Left colon (tissue), 2 donors: ENCODE measurements at regions of chr5 and their contacts with region 1.

Region 1: GRCh38 chr5:36301858-36302603 is at the start of gene RANBP3L:
- DNase-seq: peak in 1 of 2 donors; percentile 4
- ATAC-seq: peak; percentile 91
- total RNA-seq, gene RANBP3L: 0.17 TPM in 1 of 2 donors, not detected in the other

Region 2: DNA sequence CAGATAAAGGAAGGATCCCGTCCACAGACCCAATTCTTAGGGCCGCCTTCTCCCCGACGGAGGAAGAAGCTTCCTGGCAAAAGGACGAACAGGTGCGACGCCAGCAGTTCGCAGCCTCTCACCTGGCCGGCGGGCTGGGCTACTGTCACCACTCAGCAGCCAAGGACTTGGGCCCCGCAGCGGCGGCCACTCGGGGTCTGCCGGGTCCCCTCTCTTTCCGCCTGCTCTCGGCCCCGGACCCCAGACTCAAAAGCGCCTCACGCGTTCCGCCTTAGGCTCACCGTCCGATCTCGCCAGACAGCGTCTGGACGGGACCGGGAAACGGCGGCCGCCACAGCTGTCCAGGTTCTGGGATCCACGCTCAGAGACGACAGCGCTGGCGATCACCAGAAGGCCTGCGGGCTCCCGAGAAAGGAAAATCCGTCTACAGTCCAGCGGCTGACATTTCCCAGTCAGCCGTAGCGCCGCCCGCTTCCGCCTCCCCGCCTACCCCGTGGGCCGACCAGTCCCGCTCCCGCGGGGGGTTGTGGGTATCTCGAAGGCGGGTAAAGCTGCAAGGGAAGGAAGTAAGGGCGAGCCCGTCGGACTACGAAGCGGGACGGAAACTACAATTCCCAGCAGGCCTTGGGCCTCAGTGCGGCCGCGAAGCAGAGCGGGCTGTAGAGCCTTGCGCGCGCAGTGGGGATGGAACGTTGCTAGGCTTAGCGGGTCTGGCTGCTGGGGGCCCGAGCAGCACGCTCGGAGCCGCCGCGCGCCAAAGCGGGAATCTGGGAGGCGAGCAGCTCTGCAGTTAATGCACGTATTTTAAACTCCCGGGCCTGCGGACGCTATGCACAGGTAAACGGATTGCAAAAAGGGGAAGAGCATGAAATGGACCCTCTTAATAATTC is 150.4 kb before region 1 on chr5 and contains the starts of genes LMBRD2 and SKP2:
- intact Hi-C with region 1: no loop called
- DNase-seq: peak; percentile 97 to 98
- ATAC-seq: peak; percentile 99
- total RNA-seq, gene LMBRD2: 15.1 to 17.3 TPM
- total RNA-seq, gene SKP2: 14.4 to 19.1 TPM

Region 3: DNA sequence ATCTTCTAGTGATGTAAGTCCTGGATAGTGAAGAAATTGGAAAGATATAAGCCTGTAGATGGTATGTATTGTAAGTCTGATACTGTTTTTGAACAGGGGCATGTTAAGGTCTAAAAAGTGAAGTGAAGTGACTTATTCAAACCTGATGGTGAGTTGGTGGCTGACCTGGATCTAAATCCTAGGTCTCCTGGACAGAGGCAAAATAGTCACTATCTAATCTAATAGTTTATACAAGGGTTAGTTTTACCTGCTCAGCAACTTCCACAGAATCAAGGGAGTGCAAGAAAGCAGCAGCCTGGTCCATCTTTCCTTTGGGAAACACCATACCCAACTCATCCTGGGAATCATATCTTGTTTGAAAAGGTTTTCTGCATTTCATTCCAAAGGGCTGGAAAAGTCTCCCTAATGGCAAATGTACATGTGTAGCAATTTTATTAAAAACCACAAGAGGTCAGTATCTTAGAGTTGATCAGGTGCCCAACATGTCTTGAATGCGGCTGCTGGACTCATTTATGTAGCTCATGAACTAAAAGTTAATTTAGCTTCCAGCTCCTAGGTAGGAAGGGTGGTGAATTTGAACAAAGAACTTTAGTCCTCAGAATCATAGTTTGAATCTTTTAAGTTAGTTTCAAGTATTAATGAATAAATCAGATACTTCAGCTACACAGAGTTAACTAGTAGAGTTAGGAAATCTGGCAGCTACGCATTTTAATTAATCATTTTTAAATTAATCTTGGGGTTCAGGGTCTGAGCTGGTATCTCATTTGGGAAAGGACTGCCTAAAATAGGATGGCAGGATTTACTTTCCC is 124.1 kb before region 1 on chr5:
- intact Hi-C with region 1: loop called in 1 of 2 experiments (anchors 5 kb)
- DNase-seq: no peak
- ATAC-seq: peak; percentile 64

Region 4: GRCh38 chr5:36790838-36791237 is 488.8 kb after region 1 on chr5:
- intact Hi-C with region 1: no loop called
- DNase-seq: no peak
- ATAC-seq: no peak